A673 (cell line): ENCODE measurements at regions of chr6 and their contacts with region 1.

Region 1: DNA sequence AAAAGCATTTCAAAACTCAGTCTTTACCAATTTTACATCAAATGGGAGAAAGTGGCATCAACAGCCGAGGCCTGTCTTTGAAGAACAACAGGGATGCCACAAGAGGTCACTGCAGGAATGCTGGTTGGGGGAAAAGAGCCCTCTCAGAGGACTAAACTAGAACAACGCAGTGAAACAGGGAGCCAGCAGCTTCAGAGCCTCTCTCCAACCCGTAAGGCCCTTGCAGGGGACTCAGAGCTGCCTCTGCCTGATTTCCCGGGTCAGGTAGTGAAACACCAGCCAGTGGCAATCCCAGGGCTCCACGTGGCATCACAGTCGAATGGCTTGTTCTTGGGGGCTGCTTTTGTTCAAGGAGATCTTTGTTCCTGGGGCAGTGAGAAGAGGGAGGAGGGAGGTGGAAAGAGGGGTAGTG is 55.0 kb upstream of the KCNK16 start:
- DNase-seq: peak; percentile 84
- H3K4me3 ChIP-seq: no peak overlapping the region
- H3K27ac ChIP-seq: no peak overlapping the region
- H3K4me1 ChIP-seq: no peaks in the 10 kb centered on the region
- H3K27me3 ChIP-seq: no peaks in the 10 kb centered on the region
- CTCF ChIP-seq: peak; percentile 82

Region 2: GRCh38 chr6:39892490-39893129 is 515.1 kb after region 1 on chr6:
- CTCF ChIA-PET with region 1: no interaction called
- POLR2A ChIA-PET with region 1: no interaction called
- intact Hi-C with region 1: loop called (anchors 1 kb)
- DNase-seq: peak; percentile 48
- H3K4me3 ChIP-seq: no peak overlapping the region
- H3K27ac ChIP-seq: no peak overlapping the region
- H3K4me1 ChIP-seq: no peaks in the 10 kb centered on the region
- H3K27me3 ChIP-seq: no peaks in the 10 kb centered on the region
- CTCF ChIP-seq: peak; percentile 61

Region 3: GRCh38 chr6:40563111-40563510 is 1185.6 kb after region 1 on chr6:
- CTCF ChIA-PET with region 1: no interaction called
- POLR2A ChIA-PET with region 1: no interaction called
- intact Hi-C with region 1: no loop called
- DNase-seq: peak; percentile 48
- H3K4me3 ChIP-seq: no peak overlapping the region
- H3K27ac ChIP-seq: peak overlapping the region; percentile 61
- H3K4me1 ChIP-seq: peaks cover 76% of the 10 kb centered on the region
- H3K27me3 ChIP-seq: no peaks in the 10 kb centered on the region
- CTCF ChIP-seq: no peak